Activated T-helper 1 cell treated with anti-CD3 and anti-CD28 coated beads, Interleukin-12 subunit alpha, Interleukin-12 subunit beta, Interleukin-2, Interleukin-4 antibody, amounts not matched to agents 30 ng/mL and 10 ng/mL and 1 ng/mL, durations not matched to agents 14 hours and 24 hours and 36 hours (primary cell): ENCODE measurements at regions of chr1 and their contacts with region 1.

Region 1: DNA sequence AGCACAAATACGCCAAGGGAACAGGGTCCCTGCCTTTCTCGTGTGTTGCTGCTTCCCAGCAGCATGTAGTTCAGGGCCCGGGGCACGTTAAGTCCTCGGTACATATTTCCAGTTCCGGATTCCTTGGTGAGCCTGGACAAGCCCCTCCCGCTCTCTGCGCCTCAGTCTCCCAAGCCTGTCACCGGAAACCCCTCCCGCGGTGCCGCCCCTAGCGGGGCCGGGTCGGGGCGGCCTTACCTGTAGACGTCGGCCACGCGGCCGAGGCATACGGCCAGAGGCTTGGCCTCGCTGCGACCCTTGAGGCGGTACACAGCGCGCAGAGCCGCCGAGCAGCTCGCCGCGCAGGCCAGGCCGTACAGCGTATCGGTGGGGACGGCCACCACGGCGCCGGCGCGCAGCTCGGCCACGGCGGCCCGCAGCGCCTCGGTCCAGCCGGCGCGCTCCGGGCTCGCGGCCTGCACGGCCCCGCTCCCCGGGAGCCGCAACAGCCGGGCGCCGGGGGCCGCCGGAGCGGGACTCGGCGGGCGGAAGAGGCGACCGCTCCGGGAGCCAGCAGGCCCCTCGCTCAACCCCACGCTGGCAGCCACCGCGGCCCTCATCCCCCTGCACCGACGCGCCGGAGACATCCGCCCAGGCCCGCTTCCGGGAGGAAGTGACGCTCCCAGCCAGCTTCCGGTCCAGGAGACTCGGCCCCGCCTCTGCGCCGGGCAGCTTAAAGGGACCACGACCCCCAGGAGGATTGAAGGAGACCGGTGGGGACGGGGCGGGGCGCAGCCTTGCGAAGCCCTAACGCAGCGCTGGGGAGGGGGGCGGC is at the starts of genes C1orf122 and YRDC:
- DNase-seq: peak; percentile 91
- H3K4me3 Mint-ChIP-seq: peak within 1 kb of the TSS; percentile 95
- H3K27ac Mint-ChIP-seq: peak within 1 kb of the TSS; percentile 97
- H3K4me1 Mint-ChIP-seq: peaks cover 53% of the 10 kb centered on the region
- H3K27me3 Mint-ChIP-seq: no peaks in the 10 kb centered on the region
- total RNA-seq, gene C1orf122: 30.7 and 33.3 TPM in 2 replicates
- total RNA-seq, gene YRDC: 73.9 and 77.6 TPM in 2 replicates

Region 2: DNA sequence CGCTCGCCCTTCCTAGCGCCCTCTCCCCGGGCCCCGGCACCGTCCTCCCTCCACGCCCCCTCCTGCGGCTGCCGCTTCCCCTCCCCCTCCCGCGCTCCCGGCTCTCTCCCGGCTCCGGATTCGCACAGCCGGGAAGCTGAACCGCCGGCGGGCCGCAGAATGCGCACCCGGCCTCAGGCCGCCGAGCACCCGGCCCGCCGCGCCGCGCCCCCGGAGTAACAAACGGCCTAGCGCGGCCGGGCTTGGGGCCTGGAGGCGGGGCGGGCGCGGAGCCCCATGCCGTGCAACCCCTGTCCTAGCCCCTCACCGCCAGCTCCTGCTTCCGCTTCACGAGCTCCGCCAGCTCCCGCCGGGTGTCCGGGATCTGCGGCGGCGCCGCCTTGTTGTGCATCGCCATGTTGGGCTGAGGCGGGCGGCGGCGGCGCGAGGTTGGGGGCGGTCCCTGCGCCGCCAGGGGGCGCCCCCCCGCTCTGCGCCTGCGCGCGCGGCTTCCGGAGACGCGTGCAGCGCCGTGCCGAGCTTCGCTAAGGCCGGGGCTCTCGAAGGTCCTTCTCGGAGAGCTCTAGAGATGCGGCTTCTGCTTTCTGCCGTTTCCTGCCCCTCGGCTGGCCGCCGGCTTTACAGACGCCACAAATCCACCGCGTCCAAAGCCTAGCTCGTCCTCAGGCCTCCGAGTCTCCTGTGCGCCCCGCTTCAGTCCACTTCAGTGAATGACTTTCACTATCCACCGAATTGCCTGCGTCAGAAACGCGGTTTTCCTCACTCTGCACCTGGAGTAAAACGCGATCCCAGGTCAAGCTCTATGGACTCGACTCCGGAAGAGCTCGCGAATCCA is 293.2 kb before region 1 on chr1 and contains the start of gene MEAF6:
- intact Hi-C with region 1: loop called (anchors 10 kb)
- DNase-seq: peak; percentile 84
- H3K4me3 Mint-ChIP-seq: peak within 1 kb of the TSS; percentile 96
- H3K27ac Mint-ChIP-seq: peak within 1 kb of the TSS; percentile 96
- H3K4me1 Mint-ChIP-seq: peaks cover 45% of the 10 kb centered on the region
- H3K27me3 Mint-ChIP-seq: no peaks in the 10 kb centered on the region
- total RNA-seq, gene MEAF6: 102 and 103 TPM in 2 replicates

Region 3: GRCh38 chr1:37776946-37777516 is 30.7 kb before region 1 on chr1:
- intact Hi-C with region 1: loop called (anchors 2 kb)
- DNase-seq: no peak
- H3K4me3 Mint-ChIP-seq: no peak overlapping the region
- H3K27ac Mint-ChIP-seq: no peak overlapping the region
- H3K4me1 Mint-ChIP-seq: peaks cover 12% of the 10 kb centered on the region
- H3K27me3 Mint-ChIP-seq: peaks cover 13% of the 10 kb centered on the region

Region 4: DNA sequence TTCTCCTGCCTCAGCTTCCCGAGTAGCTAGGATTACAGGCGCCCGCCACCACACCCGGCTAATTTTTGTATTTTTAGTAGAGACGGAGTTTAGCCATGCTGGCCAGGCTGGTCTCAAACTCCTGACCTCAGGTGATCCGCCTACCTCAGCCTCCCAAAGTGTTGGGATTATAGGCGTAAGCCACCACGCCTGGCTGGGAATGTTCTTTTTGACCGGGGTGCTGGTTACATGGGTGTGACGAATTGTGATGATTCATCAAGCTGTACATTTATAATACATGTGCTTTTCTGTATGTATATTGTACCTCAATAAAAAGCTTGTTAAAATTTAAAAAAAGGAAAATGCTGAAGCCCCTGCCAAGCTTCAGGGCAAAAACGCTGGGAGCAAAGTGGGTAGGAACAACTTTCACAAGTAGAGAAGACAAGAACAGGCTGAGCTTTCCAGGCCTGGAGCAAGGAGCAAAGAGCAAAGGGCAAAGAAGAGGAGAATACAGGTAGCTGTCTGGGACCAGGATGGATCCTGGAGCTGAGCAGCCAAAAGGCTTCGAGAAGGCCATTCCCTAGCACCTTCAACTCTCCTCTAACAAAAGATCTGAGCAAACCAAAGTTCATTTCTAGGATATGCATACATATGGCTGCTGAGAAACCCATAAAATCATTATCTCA is 20.8 kb after region 1 on chr1:
- intact Hi-C with region 1: loop called (anchors 2 kb)
- DNase-seq: no peak
- H3K4me3 Mint-ChIP-seq: no peak overlapping the region
- H3K27ac Mint-ChIP-seq: no peak overlapping the region
- H3K4me1 Mint-ChIP-seq: peaks cover 14% of the 10 kb centered on the region
- H3K27me3 Mint-ChIP-seq: no peaks in the 10 kb centered on the region

Region 5: GRCh38 chr1:37931361-37932158 is 123.8 kb after region 1 on chr1:
- intact Hi-C with region 1: loop called (anchors 2 kb)
- DNase-seq: peak; percentile 96
- H3K4me3 Mint-ChIP-seq: peak overlapping the region; percentile 95
- H3K27ac Mint-ChIP-seq: peak overlapping the region; percentile 81
- H3K4me1 Mint-ChIP-seq: peaks cover 28% of the 10 kb centered on the region
- H3K27me3 Mint-ChIP-seq: no peaks in the 10 kb centered on the region

Region 6: DNA sequence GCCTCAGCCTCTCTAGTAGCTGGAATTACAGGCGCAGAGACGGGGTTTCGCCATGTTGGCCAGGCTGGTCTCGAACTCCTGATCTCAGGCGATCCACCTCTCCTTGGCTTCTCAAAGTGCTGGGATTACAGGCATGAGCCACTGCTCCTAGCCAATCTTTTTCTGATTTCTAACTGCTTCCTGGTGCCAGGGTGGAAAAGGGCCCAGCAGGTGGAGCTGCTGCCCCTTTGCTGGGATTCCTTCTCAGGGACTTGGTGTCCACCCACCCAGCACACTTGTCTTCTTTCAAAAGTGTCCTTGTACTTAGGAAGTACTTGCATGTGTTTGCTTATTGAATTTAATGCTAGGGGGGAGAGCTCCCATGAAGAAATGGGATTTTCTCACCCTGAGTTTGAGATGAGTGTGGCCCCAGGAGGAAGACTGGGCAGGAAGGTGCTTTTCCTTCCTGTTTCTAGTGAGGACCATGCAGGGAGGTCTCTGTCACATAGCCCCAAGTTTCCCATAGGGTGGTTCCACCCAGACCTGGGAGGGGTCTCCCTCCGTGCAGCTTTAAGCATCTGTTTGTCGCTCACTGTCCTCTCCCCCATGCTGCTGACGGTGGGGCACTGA is 218.9 kb after region 1 on chr1:
- intact Hi-C with region 1: no loop called
- DNase-seq: no peak
- H3K4me3 Mint-ChIP-seq: no peak overlapping the region
- H3K27ac Mint-ChIP-seq: peak overlapping the region; percentile 48
- H3K4me1 Mint-ChIP-seq: peaks cover 59% of the 10 kb centered on the region
- H3K27me3 Mint-ChIP-seq: peaks cover 2% of the 10 kb centered on the region

Region 7: DNA sequence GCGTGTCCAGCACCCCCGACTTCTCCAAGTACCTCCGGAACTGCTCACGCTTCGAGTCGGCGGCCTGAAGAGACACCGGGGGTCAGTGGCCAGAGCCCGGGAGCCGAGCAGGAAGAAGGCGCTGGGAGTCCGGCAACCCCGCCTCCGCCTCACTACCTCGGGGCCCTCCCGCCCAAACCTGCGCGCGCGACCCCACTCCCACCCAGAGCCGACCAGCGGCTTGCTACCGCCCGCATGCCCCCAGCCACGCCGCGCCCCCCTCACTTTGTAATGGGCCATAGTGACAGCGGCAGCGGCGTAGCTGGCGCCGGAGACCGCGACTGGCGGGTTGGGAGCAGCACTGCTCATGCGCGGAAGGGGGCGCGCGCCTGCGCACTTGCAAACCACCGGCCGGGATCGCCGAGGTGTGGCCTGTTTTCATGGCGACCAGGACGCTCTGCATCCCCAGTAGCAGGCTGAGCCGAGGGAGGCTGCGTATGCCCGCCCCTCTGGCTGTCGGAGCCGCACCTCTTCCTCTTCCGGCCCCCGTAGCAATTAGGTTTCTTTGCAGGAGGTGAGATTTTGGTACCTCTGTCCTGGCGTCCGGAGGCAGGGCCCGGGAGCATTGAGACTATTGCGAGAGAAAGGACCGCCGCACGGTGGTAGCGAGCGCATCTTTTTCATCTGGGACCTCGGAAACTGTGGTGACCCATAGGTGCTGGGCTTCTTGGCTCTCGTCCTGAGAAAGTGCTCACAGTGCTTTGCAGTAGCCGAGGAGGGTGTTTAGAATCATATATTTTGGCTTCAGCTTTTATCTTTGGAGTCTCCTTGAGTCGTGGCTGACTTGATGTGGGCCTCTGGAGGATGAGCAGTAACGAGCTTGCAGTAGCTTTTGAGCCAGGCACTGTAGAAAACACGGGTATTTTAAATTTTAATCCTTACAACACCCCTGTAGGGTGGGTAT is 1065.5 kb after region 1 on chr1 and contains the start of gene MYCBP:
- intact Hi-C with region 1: loop called (anchors 2 kb)
- DNase-seq: peak; percentile 98
- H3K4me3 Mint-ChIP-seq: peak within 1 kb of the TSS; percentile 87
- H3K27ac Mint-ChIP-seq: peak within 1 kb of the TSS; percentile 79
- H3K4me1 Mint-ChIP-seq: peaks cover 23% of the 10 kb centered on the region
- H3K27me3 Mint-ChIP-seq: no peaks in the 10 kb centered on the region
- total RNA-seq, gene MYCBP: 38.4 and 39.7 TPM in 2 replicates